ENCODE measurements at regions of chr3 and their contacts with region 1.

Region 1: DNA sequence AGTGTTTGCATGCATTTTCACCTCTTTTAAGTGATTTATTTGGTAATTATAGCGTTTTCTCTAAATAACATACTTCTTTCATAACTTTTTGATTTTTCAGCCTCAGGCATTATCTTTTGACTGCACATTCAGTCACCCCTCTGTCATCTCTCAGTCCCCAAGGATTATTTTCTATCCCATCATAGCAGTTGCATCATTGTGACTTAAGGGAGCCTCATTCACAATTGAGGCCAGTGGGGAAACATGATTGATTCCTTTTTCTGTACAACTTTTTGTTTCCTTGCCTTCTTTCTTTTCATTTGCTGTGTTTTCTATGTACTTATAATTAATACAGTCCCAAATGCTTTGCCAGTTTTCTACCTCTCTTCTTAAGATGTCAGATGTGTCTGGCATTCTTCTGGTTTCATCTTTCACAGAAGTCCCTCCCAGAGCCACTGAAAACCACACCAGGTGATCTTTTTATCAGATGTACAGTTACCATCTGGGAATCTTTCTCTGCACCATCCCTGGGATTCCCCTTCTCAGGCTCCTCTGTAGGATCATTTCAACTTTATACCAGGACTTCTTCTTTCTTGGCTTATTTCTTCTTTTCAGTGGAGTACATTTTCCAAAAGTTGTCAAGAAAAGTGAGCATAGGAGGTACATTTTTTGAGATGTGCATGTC is 151.4 kb downstream of the RAP2B start:
- DNase-seq: no peak
- ATAC-seq: no peak
- H3K4me3 ChIP-seq: no peak overlapping the region
- H3K27ac ChIP-seq: no peak overlapping the region
- H3K4me1 ChIP-seq: 0 out of 2 replicates have a peak, but pooled peaks cover 5% of the 10 kb centered on the region
- H3K27me3 ChIP-seq: no peaks in the 10 kb centered on the region
- CTCF ChIP-seq: no peak

Region 2: GRCh38 chr3:153350420-153350819 is 37.0 kb after region 1 on chr3:
- CTCF ChIA-PET with region 1: no interaction called
- POLR2A ChIA-PET with region 1: no interaction called
- intact Hi-C with region 1: loop called (anchors 2 kb)
- DNase-seq: peak; percentile 92
- ATAC-seq: peak; percentile 96
- H3K4me3 ChIP-seq: no peak overlapping the region
- H3K27ac ChIP-seq: 0 out of 2 replicates have a peak overlapping the region, but pooled peaks have one; percentile 10
- H3K4me1 ChIP-seq: peaks cover 30% of the 10 kb centered on the region
- H3K27me3 ChIP-seq: no peaks in the 10 kb centered on the region
- CTCF ChIP-seq: no peak

Region 3: DNA sequence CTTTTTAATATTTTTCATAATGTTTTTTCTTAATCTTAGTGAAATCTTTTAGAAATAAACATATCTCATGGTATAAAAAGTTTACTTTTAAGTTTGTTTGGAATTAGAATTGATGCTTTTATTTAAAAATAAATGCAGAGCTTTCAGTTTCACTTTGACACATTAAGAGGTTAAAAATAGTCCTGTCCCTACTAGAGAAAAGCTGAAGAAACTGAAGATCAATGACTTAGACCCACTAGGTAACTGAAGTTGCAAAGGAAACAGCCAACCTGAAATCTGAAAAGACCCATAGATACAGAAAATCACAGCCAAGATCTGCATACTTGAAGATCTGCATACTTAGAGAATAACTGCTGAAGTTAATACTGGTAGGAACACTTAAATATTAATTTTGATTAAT is 86.2 kb after region 1 on chr3:
- CTCF ChIA-PET with region 1: no interaction called
- POLR2A ChIA-PET with region 1: no interaction called
- intact Hi-C with region 1: loop called (anchors 10 kb)
- DNase-seq: no peak
- ATAC-seq: no peak
- H3K4me3 ChIP-seq: no peak overlapping the region
- H3K27ac ChIP-seq: no peak overlapping the region
- H3K4me1 ChIP-seq: peaks cover 7% of the 10 kb centered on the region
- H3K27me3 ChIP-seq: no peaks in the 10 kb centered on the region
- CTCF ChIP-seq: no peak